Activated T-helper 1 cell treated with anti-CD3 and anti-CD28 coated beads, Interleukin-12 subunit alpha, Interleukin-12 subunit beta, Interleukin-2, Interleukin-4 antibody, amounts not matched to agents 30 ng/mL and 10 ng/mL and 1 ng/mL, durations not matched to agents 14 hours and 24 hours and 36 hours (primary cell): ENCODE measurements at regions of chr15 and their contacts with region 1.

Region 1: DNA sequence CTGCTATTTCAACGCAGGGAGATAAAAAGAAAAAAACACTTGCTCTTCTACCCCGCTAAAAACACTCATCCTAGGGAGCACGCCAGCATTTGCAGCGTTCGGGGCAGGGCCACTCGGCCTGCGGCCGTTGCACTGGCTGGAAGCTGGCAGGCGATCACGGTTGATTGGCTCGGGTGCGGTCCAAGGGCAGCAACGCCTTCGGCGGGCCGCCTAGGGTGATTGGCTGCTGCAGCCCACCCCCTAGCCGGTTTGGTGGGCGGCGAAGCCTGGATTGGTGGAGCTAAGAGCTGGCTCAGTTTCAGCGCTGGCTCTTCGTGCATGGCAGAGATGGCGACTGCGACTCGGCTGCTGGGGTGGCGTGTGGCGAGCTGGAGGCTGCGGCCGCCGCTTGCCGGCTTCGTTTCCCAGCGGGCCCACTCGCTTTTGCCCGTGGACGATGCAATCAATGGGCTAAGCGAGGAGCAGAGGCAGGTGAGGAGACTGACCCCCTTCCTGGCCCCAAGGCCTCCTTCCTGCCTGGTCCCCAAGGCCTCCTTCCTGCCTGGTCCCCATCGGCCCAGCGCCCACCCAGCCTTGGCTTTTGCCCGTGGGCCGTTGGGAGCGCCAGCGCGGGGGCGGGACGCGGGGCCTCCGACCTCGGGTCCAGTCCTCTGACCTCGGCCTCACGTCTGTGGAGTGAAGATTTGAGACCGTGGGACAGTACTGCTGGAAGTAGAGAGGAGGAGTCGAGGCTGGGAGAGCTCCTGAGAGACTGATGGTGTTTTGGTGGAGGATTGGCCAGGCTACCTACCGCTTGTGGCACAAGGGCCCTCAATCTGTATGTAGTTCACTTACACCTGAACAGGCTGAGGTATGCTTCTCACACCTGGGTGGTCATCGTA is at the start of gene IVD:
- DNase-seq: peak; percentile 77
- H3K4me3 Mint-ChIP-seq: peak within 1 kb of the TSS; percentile 88
- H3K27ac Mint-ChIP-seq: peak within 1 kb of the TSS; percentile 87
- H3K4me1 Mint-ChIP-seq: peaks cover 37% of the 10 kb centered on the region
- H3K27me3 Mint-ChIP-seq: no peaks in the 10 kb centered on the region
- total RNA-seq, gene IVD: 59.6 and 65.2 TPM in 2 replicates

Region 2: DNA sequence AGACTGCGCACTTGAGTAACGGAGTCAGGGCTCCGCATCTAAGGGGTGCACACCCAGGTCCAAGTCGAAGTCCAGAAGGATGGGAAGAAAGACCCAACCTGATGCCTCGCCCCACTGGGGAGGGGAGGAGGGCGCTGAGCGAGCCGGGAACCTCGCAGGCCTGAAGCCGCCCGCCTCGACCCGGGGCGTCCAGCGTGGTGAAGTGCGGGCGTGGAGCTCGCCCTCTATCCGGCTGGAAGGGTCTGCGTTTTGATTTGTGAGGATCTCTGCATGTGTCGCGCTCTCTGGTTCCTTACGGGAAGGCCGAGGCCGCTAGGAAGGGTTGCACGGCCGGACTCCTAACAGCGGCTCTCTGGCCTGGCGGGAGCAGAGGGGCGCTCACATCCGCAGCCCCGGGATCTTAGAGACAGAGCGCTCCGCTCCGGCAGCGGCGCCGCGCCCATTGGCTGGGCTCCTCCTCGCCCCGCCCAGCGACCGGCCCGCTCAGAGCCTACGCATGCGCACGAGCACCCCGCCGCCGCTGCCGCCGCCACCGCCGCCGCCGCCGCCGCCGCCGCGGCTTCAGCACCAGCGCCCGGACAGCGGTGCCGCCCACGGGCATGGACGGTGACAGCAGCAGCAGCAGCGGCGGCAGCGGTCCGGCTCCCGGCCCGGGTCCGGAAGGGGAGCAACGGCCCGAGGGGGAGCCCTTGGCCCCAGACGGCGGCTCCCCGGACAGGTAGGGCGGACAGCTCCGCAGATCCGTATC is 47.8 kb before region 1 on chr15 and contains the start of gene DISP2:
- intact Hi-C with region 1: loop called (anchors 1 kb)
- DNase-seq: peak; percentile 82
- H3K4me3 Mint-ChIP-seq: peak within 1 kb of the TSS; percentile 80
- H3K27ac Mint-ChIP-seq: peak within 1 kb of the TSS; percentile 6
- H3K4me1 Mint-ChIP-seq: no peaks in the 10 kb centered on the region
- H3K27me3 Mint-ChIP-seq: peaks cover 29% of the 10 kb centered on the region
- total RNA-seq, gene DISP2: 0.02 and 0.54 TPM in 2 replicates

Region 3: DNA sequence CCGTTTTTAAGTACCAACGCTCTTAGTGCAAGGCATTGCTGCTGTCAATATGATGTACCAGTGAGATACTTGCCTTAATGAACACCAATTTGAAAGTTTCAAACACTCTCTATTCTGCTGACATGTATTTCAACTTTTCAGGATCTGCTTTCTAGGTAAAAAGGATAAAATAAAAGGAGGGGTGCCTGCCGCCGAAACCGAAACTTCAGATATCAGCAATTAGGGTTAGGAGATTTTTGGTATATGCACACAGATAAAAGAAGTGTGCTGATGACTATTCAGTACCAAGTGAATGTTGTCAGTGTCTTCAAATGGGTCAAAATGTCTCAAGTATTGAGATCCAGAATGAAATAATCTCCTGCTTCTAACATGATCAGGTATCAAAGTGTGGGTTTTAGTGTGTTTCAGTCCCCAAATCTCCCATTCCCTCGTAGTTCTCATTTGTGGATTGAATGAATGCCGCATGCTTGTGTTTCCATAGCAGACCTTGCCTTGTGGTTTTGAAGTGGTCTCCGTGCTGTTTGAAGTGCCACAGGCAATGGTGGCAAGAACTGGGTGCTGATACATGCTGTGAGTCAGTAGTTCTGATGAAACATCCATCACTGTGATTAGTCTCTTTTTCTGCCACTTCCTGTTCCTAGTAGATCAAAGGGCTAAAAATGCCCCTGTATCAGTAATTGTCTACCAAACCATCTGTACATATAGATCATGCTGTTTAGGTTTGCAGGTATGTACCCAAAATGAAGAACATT is 87.5 kb after region 1 on chr15:
- intact Hi-C with region 1: no loop called
- DNase-seq: peak; percentile 7
- H3K4me3 Mint-ChIP-seq: peak overlapping the region; percentile 2
- H3K27ac Mint-ChIP-seq: peak overlapping the region; percentile 27
- H3K4me1 Mint-ChIP-seq: peaks cover 18% of the 10 kb centered on the region
- H3K27me3 Mint-ChIP-seq: peaks cover 12% of the 10 kb centered on the region